GM12878 (cell line): ENCODE measurements at regions of chr12 and their contacts with region 1.

Region 1: GRCh38 chr12:127485528-127485927 is 781.4 kb upstream of the TMEM132C start:
- DNase-seq: no peak
- ATAC-seq: no peak
- H3K4me3 ChIP-seq: no peak overlapping the region
- H3K27ac ChIP-seq: no peak overlapping the region
- H3K4me1 ChIP-seq: no peaks in the 10 kb centered on the region
- H3K27me3 ChIP-seq: no peaks in the 10 kb centered on the region
- CTCF ChIP-seq: no peak
- EP300 ChIP-seq: no peak
- POLR2A ChIP-seq: no peak
- RAD21 ChIP-seq: 0 out of 2 replicates have a peak, but pooled peaks have one; percentile 5

Region 2: GRCh38 chr12:127463237-127463636 is 22.3 kb before region 1 on chr12:
- CTCF ChIA-PET with region 1: no interaction called
- POLR2A ChIA-PET with region 1: no interaction called
- RAD21 ChIA-PET with region 1: no interaction called
- SMC1A ChIA-PET with region 1: no interaction called
- in situ Hi-C with region 1: no loop called
- intact Hi-C with region 1: no loop called
- DNase-seq: no peak
- ATAC-seq: no peak
- H3K4me3 ChIP-seq: no peak overlapping the region
- H3K27ac ChIP-seq: no peak overlapping the region
- H3K4me1 ChIP-seq: no peaks in the 10 kb centered on the region
- H3K27me3 ChIP-seq: no peaks in the 10 kb centered on the region
- CTCF ChIP-seq: no peak
- EP300 ChIP-seq: no peak
- POLR2A ChIP-seq: no peak
- RAD21 ChIP-seq: no peak

Region 3: GRCh38 chr12:127559349-127560040 is 74.0 kb after region 1 on chr12:
- CTCF ChIA-PET with region 1: interaction called, 10 read pairs
- POLR2A ChIA-PET with region 1: no interaction called
- RAD21 ChIA-PET with region 1: interaction called, 4 read pairs
- SMC1A ChIA-PET with region 1: interaction called, 7 read pairs
- in situ Hi-C with region 1: no loop called
- intact Hi-C with region 1: no loop called
- DNase-seq: peak; percentile 11
- ATAC-seq: peak; percentile 66
- H3K4me3 ChIP-seq: no peak overlapping the region
- H3K27ac ChIP-seq: no peak overlapping the region
- H3K4me1 ChIP-seq: no peaks in the 10 kb centered on the region
- H3K27me3 ChIP-seq: no peaks in the 10 kb centered on the region
- CTCF ChIP-seq: peak in 2 of 3 experiments; percentile 3 to 37; a peak in 2 of 6 replicates
- EP300 ChIP-seq: no peak
- POLR2A ChIP-seq: no peak
- RAD21 ChIP-seq: no peak